Left ventricle myocardium inferior (tissue), 1 donor: ENCODE measurements at regions of chr12 and their contacts with region 1.

Region 1: GRCh38 chr12:95815635-95816212 is 25.2 kb upstream of the NTN4 start:
- DNase-seq: no peak
- H3K4me3 ChIP-seq: no peak overlapping the region
- H3K27ac ChIP-seq: no peak overlapping the region
- H3K4me1 ChIP-seq: peaks cover 6% of the 10 kb centered on the region
- H3K27me3 ChIP-seq: no peaks in the 10 kb centered on the region
- CTCF ChIP-seq: peak; percentile 85

Region 2: DNA sequence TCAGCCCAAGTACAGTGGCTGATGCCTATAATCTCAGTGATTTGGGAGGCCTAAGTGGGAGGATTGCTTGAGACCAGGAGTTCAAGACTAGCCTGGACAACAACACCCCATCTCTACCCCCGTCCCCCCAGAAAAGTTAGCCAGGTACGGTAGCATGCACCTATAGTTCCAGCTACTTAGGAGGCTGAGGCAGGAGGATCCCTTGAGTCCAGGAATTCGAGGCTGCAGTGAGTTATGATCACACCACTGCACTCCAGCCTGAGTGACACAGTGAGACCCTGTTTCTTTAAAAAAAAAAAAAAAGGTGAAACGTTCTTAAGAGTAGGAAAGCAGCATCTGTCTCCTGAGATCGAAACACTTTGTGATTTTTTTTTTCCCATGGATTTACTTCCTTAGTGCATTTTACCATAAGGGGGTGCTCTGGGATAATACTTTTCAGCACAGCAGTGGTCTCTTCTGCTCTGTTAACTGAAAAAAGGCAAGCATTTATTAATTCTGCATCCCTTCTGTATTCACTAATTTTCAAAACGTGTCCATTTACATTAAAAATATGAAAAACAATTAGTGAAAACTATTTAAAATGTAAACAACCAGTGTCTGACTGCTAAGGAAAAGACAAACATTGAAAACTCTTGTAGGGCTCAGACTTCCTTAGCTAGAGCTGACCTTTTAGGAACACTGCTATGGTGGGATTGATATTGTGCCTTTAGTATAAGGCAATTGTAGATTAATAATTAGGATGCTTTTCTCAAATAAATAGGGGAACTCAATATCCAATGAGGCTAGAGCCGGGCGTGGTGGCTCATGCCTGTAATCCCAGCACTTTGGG is 233.3 kb before region 1 on chr12:
- intact Hi-C with region 1: loop called (anchors 2 kb)
- DNase-seq: no peak
- H3K4me3 ChIP-seq: no peak overlapping the region
- H3K27ac ChIP-seq: no peak overlapping the region
- H3K4me1 ChIP-seq: peaks cover 6% of the 10 kb centered on the region
- H3K27me3 ChIP-seq: no peaks in the 10 kb centered on the region
- CTCF ChIP-seq: peak; percentile 76

Region 3: DNA sequence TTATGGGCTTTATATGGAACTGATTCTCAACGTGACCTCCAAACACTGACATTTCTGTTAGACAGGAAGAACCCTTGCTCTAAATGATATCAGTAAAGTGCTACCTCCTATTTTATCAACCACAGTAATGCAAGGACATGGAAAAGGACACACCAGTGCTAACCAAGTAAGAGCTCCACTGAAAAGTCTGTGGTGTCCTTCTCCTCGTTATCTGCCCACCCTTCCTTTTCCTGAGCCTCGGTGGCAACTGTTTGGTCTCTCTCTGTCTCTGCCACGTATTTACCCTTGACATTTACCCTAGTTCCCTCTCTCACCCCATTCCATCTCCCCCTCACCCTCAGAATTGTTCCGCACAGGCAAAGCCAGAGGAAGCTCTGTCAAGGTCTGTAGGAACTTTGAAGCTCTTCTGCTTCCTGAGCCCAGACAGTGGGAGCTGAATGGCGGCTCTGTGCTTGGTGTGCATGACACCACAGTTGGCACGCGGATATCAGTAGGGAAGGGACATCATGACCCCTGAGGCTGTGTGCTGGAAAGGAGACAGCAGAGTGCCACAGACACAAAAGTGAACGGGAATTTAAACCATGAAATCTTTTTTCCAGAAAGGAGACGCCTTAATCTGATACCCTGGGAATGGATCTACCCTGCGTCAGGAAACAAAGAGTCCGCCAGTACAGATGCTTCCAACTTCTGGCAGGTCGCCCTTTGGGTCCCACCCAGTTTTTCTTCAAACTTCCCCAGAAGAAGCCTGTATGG is 76.0 kb before region 1 on chr12:
- intact Hi-C with region 1: no loop called
- DNase-seq: peak; percentile 75
- H3K4me3 ChIP-seq: peak overlapping the region; percentile 44
- H3K27ac ChIP-seq: peak overlapping the region; percentile 96
- H3K4me1 ChIP-seq: peaks cover 81% of the 10 kb centered on the region
- H3K27me3 ChIP-seq: no peaks in the 10 kb centered on the region
- CTCF ChIP-seq: no peak

Region 4: DNA sequence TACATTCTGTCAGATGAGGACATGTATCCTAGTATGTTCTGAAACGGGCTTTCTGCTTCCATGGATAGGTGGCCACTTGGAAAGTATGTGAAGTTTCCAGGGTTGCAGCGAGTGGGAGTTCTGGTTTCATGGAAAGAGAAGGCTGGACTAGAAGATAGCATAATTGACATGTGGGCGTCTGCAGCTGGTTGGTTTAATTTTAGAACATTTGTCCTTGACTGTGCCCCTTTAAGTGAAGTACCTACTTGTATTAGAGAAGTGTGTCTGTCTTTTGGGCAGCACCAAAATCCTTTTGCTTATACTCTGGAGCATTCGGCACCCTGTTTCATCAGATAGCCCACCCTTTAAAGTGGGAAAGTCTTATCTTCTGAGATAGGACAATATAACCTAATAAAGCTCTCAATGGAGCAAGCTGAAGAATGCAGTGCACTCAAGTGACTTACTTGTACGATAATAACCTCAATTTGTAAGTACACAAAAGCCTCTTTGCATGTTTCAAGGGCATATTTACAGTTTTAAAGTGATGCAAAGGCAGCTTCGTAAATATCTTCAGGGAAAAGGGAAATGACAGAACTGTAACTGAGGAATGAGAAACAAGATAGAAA is 60.4 kb before region 1 on chr12:
- intact Hi-C with region 1: no loop called
- DNase-seq: no peak
- H3K4me3 ChIP-seq: peak overlapping the region; percentile 48
- H3K27ac ChIP-seq: peak overlapping the region; percentile 77
- H3K4me1 ChIP-seq: peaks cover 32% of the 10 kb centered on the region
- H3K27me3 ChIP-seq: no peaks in the 10 kb centered on the region
- CTCF ChIP-seq: no peak

Region 5: DNA sequence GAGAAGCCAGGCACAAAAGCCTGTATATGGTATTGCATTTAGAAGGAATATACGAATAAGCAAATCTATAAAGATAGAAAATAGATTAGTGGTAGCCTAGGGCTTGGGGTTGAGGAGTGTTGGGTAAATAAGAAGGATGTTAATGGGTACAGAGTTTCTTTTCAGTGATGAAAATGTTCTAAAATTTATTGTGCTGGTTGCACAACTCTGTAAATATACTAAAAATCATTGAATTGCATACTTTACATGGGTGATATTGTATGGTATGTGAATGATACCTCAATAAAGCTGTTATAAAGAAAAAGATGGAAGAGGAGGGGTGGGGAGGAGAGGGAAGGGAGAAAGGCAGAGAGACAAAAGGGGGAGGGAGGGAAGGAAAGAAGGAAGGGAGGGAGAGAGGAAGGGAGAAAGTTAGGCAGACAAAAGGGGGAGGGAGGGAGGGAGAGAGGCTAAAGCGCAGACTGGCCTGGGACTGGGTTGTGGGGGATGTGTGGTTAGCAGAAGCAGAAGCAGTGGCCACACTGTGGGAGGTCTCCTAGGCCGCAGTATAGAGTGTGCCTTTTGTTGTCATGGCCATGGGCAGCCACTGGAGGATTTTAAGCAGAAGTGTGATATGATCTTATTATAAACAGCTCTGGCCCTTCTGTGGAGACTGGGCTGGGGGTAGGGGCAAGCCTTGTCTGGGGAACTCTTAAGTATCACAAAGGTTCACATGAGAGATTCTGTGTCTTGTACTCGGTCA is 304.8 kb after region 1 on chr12:
- intact Hi-C with region 1: no loop called
- DNase-seq: no peak
- H3K4me3 ChIP-seq: no peak overlapping the region
- H3K27ac ChIP-seq: peak overlapping the region; percentile 9
- H3K4me1 ChIP-seq: peaks cover 6% of the 10 kb centered on the region
- H3K27me3 ChIP-seq: peaks cover 18% of the 10 kb centered on the region
- CTCF ChIP-seq: no peak